ENCODE measurements at regions of chr7 and their contacts with region 1.

Region 1: DNA sequence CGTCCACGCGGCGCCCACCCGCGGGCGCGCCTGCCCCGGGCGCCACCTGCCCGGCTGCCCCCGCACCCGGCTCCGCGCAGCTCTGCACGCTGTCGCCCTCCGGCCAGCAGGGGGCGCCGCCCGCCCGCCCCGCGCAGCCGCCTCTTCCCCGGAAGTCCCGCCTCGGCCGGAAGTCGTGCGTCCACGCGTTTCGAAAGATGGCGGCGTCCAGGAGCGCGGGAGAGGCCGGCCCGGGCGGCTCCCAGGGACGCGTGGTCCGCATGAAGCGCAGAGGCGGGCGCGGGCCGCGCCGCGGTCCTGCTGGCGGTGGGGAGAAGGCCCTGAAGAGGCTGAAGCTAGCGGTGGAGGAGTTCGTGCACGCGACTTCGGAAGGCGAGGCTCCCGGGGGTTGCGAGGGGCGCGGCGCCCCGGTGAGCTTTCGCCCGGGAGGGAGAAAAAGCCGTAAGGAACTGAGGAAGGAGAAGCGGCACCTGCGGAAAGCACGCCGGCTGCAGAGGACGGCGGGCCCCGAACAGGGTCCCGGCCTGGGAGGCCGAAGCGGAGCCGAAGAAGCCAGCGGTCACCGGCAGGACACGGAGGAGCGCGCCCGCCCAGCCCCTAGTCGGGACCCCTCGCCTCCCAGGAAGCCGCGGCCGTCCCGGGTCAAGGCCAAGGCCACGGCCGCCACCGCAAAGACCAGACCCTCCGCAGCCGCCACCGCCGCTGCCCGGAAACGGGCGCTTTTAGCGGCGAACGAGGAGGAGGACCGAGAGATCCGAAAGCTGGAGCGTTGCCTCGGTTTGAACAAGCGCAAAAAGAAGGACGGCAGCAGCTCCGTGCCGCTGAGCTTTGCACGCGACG is at the start of gene NOM1:
- DNase-seq: peak; percentile 93
- H3K4me3 Mint-ChIP-seq: peak within 1 kb of the TSS; percentile 86
- H3K27ac Mint-ChIP-seq: peak within 1 kb of the TSS; percentile 68
- H3K4me1 Mint-ChIP-seq: peaks cover 28% of the 10 kb centered on the region
- H3K27me3 Mint-ChIP-seq: peaks cover 7% of the 10 kb centered on the region
- CTCF ChIP-seq: peak; percentile 78
- total RNA-seq, gene NOM1: 32.9 and 35.1 TPM in 2 replicates

Region 2: DNA sequence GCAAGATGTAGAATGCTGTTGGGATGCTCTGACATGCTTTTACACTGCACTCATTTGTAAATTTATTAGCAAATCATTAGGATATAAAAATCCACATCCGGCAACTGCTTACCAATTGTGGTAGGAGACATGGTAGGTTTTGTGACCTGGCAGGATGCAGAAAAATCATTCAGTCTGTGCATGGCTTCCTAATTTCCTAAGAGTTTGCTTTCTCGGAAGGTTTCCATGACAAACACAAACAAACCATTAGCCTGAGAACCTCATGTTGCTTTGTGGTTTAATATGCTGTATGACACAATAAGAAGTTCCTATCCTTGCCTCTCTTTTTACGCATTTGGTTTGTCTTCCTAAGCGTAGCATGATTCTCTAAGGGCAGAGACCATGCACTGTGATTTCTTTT is 42.1 kb before region 1 on chr7:
- CTCF ChIA-PET with region 1: no interaction called
- intact Hi-C with region 1: loop called (anchors 5 kb)
- DNase-seq: no peak
- H3K4me3 Mint-ChIP-seq: no peak overlapping the region
- H3K27ac Mint-ChIP-seq: no peak overlapping the region
- H3K4me1 Mint-ChIP-seq: peaks cover 13% of the 10 kb centered on the region
- H3K27me3 Mint-ChIP-seq: peaks cover 10% of the 10 kb centered on the region
- CTCF ChIP-seq: no peak

Region 3: DNA sequence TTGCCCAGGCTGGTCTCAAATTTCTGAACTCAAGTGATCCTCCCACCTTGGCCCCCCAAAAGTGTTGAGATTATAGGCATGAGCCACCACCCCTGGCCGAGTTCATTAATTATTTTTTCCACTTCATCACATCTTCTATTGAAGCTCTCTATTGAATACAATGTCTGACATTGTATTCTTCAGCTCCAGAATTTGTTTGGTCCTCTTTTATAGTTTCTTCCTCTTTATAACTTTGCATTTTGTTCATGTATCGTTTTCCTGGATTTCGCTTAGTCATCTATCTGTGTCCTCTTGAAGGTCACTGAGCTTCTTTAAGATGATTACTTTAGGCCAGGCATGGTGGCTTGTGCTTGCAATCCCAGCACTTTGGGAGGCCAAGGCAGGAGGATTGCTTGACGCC is 29.9 kb after region 1 on chr7:
- CTCF ChIA-PET with region 1: interaction called, 10 read pairs
- intact Hi-C with region 1: no loop called
- DNase-seq: no peak
- H3K4me3 Mint-ChIP-seq: no peak overlapping the region
- H3K27ac Mint-ChIP-seq: peak overlapping the region; percentile 50
- H3K4me1 Mint-ChIP-seq: no peaks in the 10 kb centered on the region
- H3K27me3 Mint-ChIP-seq: no peaks in the 10 kb centered on the region
- CTCF ChIP-seq: no peak

Measured in Calu3 (cell line).